ENCODE measurements at regions of chr5 and their contacts with region 1.

Region 1: DNA sequence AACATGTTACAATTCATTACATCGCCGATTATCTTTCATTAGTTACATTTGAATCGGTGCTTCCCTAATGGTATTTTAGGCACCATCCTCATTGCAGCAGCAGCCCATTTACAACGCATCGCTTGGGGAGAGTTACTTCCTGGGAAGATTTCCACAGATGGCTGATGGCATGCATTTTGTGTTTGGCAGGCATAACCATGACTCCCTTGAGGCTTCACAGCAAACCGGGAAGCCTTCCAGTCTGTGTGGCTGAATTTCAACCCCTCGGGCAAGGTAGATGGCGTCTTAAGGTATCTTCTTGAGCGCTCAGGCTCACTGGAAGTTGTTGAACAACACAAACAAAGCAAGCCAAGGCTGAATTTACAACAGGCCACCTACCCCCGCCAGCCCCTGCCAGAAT is 1.6 kb upstream of the DNAH5 start:
- DNase-seq: no peak
- H3K27ac ChIP-seq: no peak overlapping the region
- CTCF ChIP-seq: no peak

Region 2: DNA sequence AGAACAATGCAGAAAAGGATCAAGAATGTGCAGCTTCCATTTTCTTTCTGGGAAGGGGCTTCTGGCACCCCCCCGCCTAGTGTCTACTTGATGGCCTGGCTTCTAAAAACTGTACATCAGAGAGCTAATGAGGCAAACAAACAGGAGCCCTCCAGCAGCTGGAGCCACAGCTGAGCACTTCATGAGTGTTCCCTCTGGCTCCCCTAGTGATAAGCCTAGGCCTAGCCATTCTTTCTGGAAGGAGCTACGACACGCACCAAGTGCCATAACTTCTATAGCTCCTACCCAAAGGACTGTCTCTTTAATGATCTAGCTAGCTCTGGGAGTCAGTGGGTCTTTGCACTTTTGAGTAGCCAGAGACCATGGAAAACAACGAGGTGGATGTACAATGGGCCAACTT is 67.8 kb before region 1 on chr5:
- CTCF ChIA-PET with region 1: no interaction called
- POLR2A ChIA-PET with region 1: interaction called, 13 read pairs
- DNase-seq: no peak
- H3K27ac ChIP-seq: no peak overlapping the region
- CTCF ChIP-seq: no peak